ENCODE measurements at regions of chr12 and their contacts with region 1.

Region 1: GRCh38 chr12:67648521-67649260 is at the start of gene DYRK2:
- DNase-seq: peak; percentile 90
- ATAC-seq: peak; percentile 71
- H3K4me3 Mint-ChIP-seq: peak within 1 kb of the TSS; percentile 96
- H3K27ac Mint-ChIP-seq: peak within 1 kb of the TSS; percentile 95
- H3K4me1 Mint-ChIP-seq: peaks cover 33% of the 10 kb centered on the region
- H3K27me3 Mint-ChIP-seq: peaks cover 4% of the 10 kb centered on the region
- total RNA-seq, gene DYRK2: 108 to 109 TPM

Region 2: DNA sequence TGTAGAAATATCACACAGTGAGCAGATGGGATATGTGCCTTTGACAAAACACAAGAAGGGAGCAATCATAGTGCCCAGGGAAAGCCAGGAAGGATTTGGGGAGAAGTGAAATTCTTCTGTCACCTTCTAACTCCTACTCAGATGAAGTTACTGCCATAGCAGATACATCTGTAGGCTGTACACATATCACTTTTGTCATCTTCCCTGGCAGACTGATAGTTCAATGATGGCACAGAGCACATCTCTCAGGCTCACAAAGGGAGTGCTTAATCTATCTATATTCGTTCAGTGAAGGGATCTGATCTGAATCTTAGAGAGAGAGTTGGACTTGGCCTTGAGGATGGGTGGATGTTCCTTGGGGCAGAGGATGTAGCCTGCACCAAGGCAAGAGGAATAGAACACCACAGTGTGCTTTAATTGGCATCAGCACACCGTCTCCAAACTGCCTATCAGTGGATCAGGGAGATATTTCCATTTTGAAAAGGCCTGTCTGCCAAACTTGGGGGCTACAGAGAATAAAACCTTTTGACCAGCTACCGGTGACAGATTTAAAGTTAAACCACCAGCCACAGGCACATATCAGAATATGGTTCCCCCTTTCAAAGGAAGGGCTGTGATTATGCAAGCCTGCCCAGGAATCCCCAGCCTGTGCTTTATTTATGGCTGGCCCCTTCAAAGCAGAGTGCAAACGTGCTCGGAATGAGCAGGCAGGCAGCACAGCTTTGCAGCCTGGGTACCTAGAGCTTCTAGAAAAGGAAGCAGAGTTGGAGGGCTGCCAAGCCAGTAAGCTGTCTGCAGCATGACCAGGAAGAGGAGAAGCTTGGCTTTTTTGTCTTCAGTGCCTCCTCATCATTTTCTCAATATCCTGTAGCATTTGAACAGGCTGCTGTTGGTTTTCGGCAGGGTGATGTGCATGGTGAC is 165.7 kb before region 1 on chr12:
- POLR2A ChIA-PET with region 1: interaction called, 11 read pairs
- DNase-seq: peak; percentile 47
- ATAC-seq: peak; percentile 94
- H3K4me3 Mint-ChIP-seq: peak overlapping the region; percentile 16
- H3K27ac Mint-ChIP-seq: peak overlapping the region; percentile 74
- H3K4me1 Mint-ChIP-seq: peaks cover 23% of the 10 kb centered on the region
- H3K27me3 Mint-ChIP-seq: no peaks in the 10 kb centered on the region

Region 3: GRCh38 chr12:67562513-67563287 is 86.0 kb before region 1 on chr12:
- POLR2A ChIA-PET with region 1: no interaction called
- DNase-seq: no peak
- ATAC-seq: no peak
- H3K4me3 Mint-ChIP-seq: no peak overlapping the region
- H3K27ac Mint-ChIP-seq: no peak overlapping the region
- H3K4me1 Mint-ChIP-seq: no peaks in the 10 kb centered on the region
- H3K27me3 Mint-ChIP-seq: no peaks in the 10 kb centered on the region

Region 4: GRCh38 chr12:67578976-67579661 is 69.6 kb before region 1 on chr12:
- POLR2A ChIA-PET with region 1: interaction called, 19 read pairs
- DNase-seq: no peak
- ATAC-seq: peak; percentile 77
- H3K4me3 Mint-ChIP-seq: peak overlapping the region; percentile 71
- H3K27ac Mint-ChIP-seq: peak overlapping the region; percentile 98
- H3K4me1 Mint-ChIP-seq: peaks cover 25% of the 10 kb centered on the region
- H3K27me3 Mint-ChIP-seq: no peaks in the 10 kb centered on the region

Region 5: GRCh38 chr12:67592216-67593011 is 56.3 kb before region 1 on chr12:
- POLR2A ChIA-PET with region 1: interaction called, 47 read pairs
- DNase-seq: no peak
- ATAC-seq: peak; percentile 83
- H3K4me3 Mint-ChIP-seq: peak overlapping the region; percentile 81
- H3K27ac Mint-ChIP-seq: peak overlapping the region; percentile 89
- H3K4me1 Mint-ChIP-seq: peaks cover 36% of the 10 kb centered on the region
- H3K27me3 Mint-ChIP-seq: no peaks in the 10 kb centered on the region

Region 6: GRCh38 chr12:67617619-67618018 is 31.1 kb before region 1 on chr12:
- POLR2A ChIA-PET with region 1: no interaction called
- DNase-seq: no peak
- ATAC-seq: no peak
- H3K4me3 Mint-ChIP-seq: no peak overlapping the region
- H3K27ac Mint-ChIP-seq: no peak overlapping the region
- H3K4me1 Mint-ChIP-seq: peaks cover 2% of the 10 kb centered on the region
- H3K27me3 Mint-ChIP-seq: no peaks in the 10 kb centered on the region

Region 7: GRCh38 chr12:67630373-67631088 is 18.2 kb before region 1 on chr12:
- POLR2A ChIA-PET with region 1: interaction called, 57 read pairs
- DNase-seq: peak; percentile 88
- ATAC-seq: peak; percentile 99
- H3K4me3 Mint-ChIP-seq: peak overlapping the region; percentile 72
- H3K27ac Mint-ChIP-seq: peak overlapping the region; percentile 94
- H3K4me1 Mint-ChIP-seq: peaks cover 50% of the 10 kb centered on the region
- H3K27me3 Mint-ChIP-seq: peaks cover 3% of the 10 kb centered on the region

Region 8: DNA sequence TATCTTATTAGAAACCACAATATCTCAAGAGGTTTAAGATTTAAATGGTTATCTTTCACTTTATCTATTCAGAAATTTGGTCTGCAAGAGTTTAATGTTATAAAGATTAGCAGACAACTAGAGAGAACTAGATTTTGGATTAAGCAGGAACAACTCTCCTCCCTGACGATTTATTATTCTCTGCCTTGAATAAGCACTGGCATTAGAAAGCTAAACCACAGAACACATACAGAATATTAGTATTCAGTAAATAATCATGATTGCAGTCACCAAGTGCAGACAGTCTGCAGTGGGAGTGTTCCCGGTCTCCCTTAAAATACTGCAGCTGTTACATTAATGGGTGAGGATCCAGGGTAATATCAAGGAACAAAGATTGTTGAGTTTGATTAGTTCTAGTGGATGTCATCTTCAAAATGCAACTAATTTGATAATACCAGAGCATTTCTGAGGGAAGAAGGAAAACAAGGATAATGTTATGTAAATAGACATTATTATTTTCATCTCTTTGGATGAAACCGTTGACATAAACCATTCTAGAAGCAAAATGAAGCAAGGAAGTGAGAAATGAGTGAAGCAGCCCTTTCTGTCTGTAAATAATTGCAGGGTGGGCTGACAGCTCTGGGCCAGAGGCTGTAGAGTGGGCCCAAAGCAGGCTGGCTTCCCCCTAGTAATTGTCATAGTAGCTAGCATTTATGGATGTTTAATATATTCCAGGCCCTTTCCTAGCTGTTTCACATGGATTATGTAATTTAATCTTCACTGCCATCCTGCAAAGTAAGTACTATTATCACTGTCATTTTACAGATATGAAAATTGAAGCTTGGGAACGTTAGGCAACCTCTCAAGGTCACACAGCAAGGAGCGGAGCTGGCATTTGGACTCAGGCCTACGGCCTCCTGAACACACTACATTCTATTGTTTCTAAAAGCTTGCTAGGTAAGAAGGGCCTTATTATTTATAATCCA is 79.3 kb after region 1 on chr12:
- POLR2A ChIA-PET with region 1: no interaction called
- DNase-seq: no peak
- ATAC-seq: no peak
- H3K4me3 Mint-ChIP-seq: no peak overlapping the region
- H3K27ac Mint-ChIP-seq: no peak overlapping the region
- H3K4me1 Mint-ChIP-seq: no peaks in the 10 kb centered on the region
- H3K27me3 Mint-ChIP-seq: peaks cover 6% of the 10 kb centered on the region